Gastrocnemius medialis (tissue), 4 donors: ENCODE measurements at regions of chr14 and their contacts with region 1.

Region 1: GRCh38 chr14:56491299-56492285 is 88.0 kb upstream of the TMEM260 start:
- DNase-seq: no peak
- ATAC-seq: peak in 1 of 2 donors; percentile 27
- H3K4me3 ChIP-seq: no peak overlapping the region
- H3K27ac ChIP-seq: no peak overlapping the region
- H3K4me1 ChIP-seq: peaks cover 0 to 4% of the 10 kb centered on the region in 2 donors
- H3K27me3 ChIP-seq: no peaks in the 10 kb centered on the region
- CTCF ChIP-seq: peak in 3 of 5 experiments; percentile 44 to 68 (median 57)
- POLR2A ChIP-seq: no peak

Region 2: GRCh38 chr14:55221186-55221585 is 1270.4 kb before region 1 on chr14:
- in situ Hi-C with region 1: loop called in 1 of 4 experiments (anchors 25 kb)
- intact Hi-C with region 1: no loop called
- DNase-seq: no peak
- ATAC-seq: no peak
- H3K4me3 ChIP-seq: no peak overlapping the region
- H3K27ac ChIP-seq: no peak overlapping the region
- H3K4me1 ChIP-seq: no peaks in the 10 kb centered on the region
- H3K27me3 ChIP-seq: no peaks in the 10 kb centered on the region
- CTCF ChIP-seq: no peak
- POLR2A ChIP-seq: no peak

Region 3: GRCh38 chr14:55446218-55446654 is 1045.4 kb before region 1 on chr14:
- in situ Hi-C with region 1: loop called in 3 of 4 experiments (anchors 25 kb)
- intact Hi-C with region 1: no loop called
- DNase-seq: peak in 1 of 2 donors; percentile 14
- ATAC-seq: no peak
- H3K4me3 ChIP-seq: no peak overlapping the region
- H3K27ac ChIP-seq: no peak overlapping the region
- H3K4me1 ChIP-seq: peaks cover 0 to 5% of the 10 kb centered on the region in 2 donors
- H3K27me3 ChIP-seq: no peaks in the 10 kb centered on the region
- CTCF ChIP-seq: peak; percentile 13 to 70 (median 42)
- POLR2A ChIP-seq: no peak

Region 4: GRCh38 chr14:56579345-56580220 is 88.0 kb after region 1 on chr14 and contains the start of gene TMEM260:
- in situ Hi-C with region 1: no loop called
- intact Hi-C with region 1: loop called (anchors 5 kb)
- DNase-seq: peak; percentile 59 to 78
- ATAC-seq: peak; percentile 96 to 98
- H3K4me3 ChIP-seq: peak within 1 kb of the TSS; percentile 71 to 88 (median 80)
- H3K27ac ChIP-seq: peak within 1 kb of the TSS; percentile 79 to 90 (median 84)
- H3K4me1 ChIP-seq: peaks cover 29 to 32% of the 10 kb centered on the region in 2 donors
- H3K27me3 ChIP-seq: no peaks in the 10 kb centered on the region
- CTCF ChIP-seq: peak; percentile 80 to 95 (median 92)
- POLR2A ChIP-seq: peak; percentile 29 to 76
- total RNA-seq, gene TMEM260: 2.6 to 10.5 (median 5.3) TPM

Region 5: DNA sequence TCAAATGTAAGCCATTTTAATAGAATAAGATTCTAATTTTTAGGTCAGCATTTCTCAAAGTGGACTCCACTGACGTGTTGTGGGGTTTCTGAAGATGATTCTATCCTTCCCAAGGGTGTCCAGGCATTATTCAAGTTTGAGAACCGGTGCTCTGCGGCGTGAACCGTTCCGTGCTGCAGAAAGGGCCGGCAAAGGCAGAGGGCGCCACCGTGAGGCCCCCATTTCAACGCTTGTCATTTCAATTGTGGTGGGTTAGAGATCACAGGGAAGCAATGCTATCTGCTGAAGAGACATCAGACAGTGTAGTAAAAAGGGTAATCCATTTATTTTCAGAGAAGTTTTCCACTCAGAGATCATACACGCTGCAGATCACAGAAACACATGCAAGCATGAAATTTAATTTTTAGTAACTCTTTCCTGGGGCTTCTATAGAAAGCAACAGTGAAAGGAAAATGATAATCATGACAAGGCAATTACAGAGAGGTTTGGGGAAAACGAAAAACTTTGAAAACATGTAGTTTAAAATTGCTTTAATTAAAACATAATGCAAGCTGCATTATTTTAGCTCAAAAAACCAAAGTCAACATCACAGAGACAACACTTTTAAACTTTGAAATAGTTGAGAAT is 575.4 kb after region 1 on chr14:
- in situ Hi-C with region 1: no loop called
- intact Hi-C with region 1: loop called (anchors 10 kb)
- DNase-seq: no peak
- ATAC-seq: no peak
- H3K4me3 ChIP-seq: no peak overlapping the region
- H3K27ac ChIP-seq: no peak overlapping the region
- H3K4me1 ChIP-seq: no peaks in the 10 kb centered on the region
- H3K27me3 ChIP-seq: peaks cover 0 to 3% (median 0%) of the 10 kb centered on the region in 3 donors
- CTCF ChIP-seq: peak in 2 of 5 experiments; percentile 25 to 49
- POLR2A ChIP-seq: no peak

Region 6: GRCh38 chr14:57182760-57183503 is 691.3 kb after region 1 on chr14:
- in situ Hi-C with region 1: loop called in 1 of 4 experiments (anchors 25 kb)
- intact Hi-C with region 1: no loop called
- DNase-seq: no peak
- ATAC-seq: no peak
- H3K4me3 ChIP-seq: no peak overlapping the region
- H3K27ac ChIP-seq: no peak overlapping the region
- H3K4me1 ChIP-seq: no peaks in the 10 kb centered on the region
- H3K27me3 ChIP-seq: no peaks in the 10 kb centered on the region
- CTCF ChIP-seq: no peak
- POLR2A ChIP-seq: no peak

Region 7: DNA sequence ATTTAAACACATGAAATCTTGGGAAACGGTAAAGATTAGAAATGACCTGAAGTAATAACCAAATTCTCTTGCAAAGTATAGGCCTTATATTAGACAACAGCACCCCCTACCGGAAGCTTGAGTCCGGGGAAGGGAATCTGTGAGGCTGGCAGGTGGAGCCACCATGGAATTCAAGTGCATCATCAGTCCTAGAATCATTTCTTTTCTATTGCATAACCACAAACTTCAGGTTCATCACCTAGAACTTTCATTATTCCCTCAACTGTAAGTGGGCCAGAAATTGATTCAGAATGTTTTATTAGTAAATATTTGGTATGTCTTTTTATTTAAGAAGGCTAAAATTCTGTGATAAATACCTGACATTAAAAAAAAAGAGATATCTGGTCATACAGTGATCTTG is 825.7 kb after region 1 on chr14:
- in situ Hi-C with region 1: loop called (anchors 5 to 25 kb)
- intact Hi-C with region 1: loop called (anchors 1 kb)
- DNase-seq: peak; percentile 36 to 39
- ATAC-seq: peak in 1 of 2 donors; percentile 60
- H3K4me3 ChIP-seq: no peak overlapping the region
- H3K27ac ChIP-seq: no peak overlapping the region
- H3K4me1 ChIP-seq: no peaks in the 10 kb centered on the region
- H3K27me3 ChIP-seq: no peaks in the 10 kb centered on the region
- CTCF ChIP-seq: peak; percentile 52 to 83 (median 66)
- POLR2A ChIP-seq: no peak